ENCODE measurements at regions of chrX and their contacts with region 1.

Region 1: GRCh38 chrX:120380699-120381098 is 18.8 kb downstream of the ATP1B4 start:
- DNase-seq: peak in 9 of 14 experiments; percentile 0 to 71 (median 29)
- ATAC-seq: peak; percentile 74
- H3K4me3 ChIP-seq: no peak overlapping the region
- H3K4me3 Mint-ChIP-seq: no peak overlapping the region
- H3K27ac ChIP-seq: no peak overlapping the region
- H3K27ac Mint-ChIP-seq: no peak overlapping the region
- H3K4me1 ChIP-seq: peaks cover 4% of the 10 kb centered on the region
- H3K4me1 Mint-ChIP-seq: no peaks in the 10 kb centered on the region
- H3K27me3 ChIP-seq: no peaks in the 10 kb centered on the region
- H3K27me3 Mint-ChIP-seq: no peaks in the 10 kb centered on the region
- CTCF ChIP-seq: peak; percentile 48

Region 2: DNA sequence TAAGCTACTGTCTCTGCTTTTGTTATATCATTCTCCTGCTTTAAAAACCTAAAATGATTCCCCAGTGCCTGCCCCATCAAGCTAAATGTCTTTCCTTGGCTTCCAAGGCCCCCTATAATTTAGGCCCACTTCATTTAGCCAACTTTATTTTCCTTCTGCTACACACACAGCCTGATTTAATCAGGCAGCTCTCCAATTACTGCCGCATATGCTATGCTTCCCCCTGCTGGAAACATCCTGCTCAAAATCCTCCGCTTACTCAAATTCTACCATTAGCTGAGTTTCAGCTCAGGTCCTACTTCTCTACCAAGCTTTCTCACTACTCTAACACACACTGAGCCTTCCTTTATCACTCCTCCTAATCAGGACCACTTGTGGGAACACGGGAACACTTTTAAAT is 71.4 kb after region 1 on chrX:
- CTCF ChIA-PET with region 1: no interaction called
- POLR2A ChIA-PET with region 1: no interaction called
- intact Hi-C with region 1: loop called (anchors 1 to 5 kb)
- DNase-seq: peak in 4 of 14 experiments; percentile 14 to 38 (median 33)
- ATAC-seq: peak; percentile 43
- H3K4me3 ChIP-seq: no peak overlapping the region
- H3K4me3 Mint-ChIP-seq: no peak overlapping the region
- H3K27ac ChIP-seq: no peak overlapping the region
- H3K27ac Mint-ChIP-seq: no peak overlapping the region
- H3K4me1 ChIP-seq: no peaks in the 10 kb centered on the region
- H3K4me1 Mint-ChIP-seq: peaks cover 26% of the 10 kb centered on the region
- H3K27me3 ChIP-seq: no peaks in the 10 kb centered on the region
- H3K27me3 Mint-ChIP-seq: no peaks in the 10 kb centered on the region
- CTCF ChIP-seq: no peak